AG04450 (cell line): ENCODE measurements at regions of chr17 and their contacts with region 1.

Region 1: GRCh38 chr17:20315821-20316220 is 151.5 kb downstream of the LGALS9B start:
- DNase-seq: no peak
- H3K4me3 ChIP-seq: no peak overlapping the region
- H3K27ac ChIP-seq: no peak overlapping the region
- H3K27me3 ChIP-seq: no peaks in the 10 kb centered on the region
- CTCF ChIP-seq: no peak

Region 2: DNA sequence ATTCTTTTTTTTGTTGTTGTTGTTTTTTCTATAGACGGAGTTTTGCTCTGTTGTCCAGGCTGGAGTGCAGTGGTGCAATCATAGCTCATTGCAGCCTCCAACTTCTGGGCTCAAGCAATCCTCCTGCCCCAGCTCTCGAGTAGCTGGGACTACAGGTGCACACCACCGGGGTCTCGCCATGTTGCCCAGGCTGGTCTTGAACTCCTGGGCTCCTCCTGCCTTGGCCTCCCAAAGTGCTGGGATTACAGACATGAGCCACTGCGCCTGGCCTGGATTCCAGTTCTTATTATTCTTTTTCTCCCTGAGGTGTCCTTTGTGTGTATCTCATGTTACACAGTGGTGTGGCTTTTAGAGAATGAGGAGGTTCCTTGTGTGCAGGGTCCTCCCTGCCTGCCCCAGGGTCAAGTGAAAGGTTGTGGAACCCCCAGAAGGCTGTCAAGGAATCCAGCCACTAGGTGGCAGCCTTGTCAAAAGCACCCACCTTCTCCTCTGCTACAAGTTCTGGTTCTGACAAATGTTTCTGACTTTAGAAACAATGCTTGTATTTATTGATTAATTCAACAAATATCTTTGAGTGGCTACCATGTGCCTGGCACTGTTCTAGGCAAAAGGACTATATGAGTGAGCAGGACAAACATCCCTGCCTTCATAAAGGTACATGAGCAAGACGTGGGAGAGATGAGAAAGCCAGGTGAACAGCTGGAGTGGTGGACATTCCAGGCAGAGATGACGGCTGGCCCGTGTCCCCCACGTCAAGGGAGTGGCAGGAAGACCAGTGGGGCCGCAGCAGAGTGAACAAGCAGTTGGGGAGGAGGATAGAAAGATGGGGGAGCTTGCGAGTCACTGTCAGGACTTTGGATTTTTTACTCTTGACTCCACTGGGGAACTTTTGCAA is 194.2 kb before region 1 on chr17:
- CTCF ChIA-PET with region 1: interaction called, 13 read pairs
- POLR2A ChIA-PET with region 1: no interaction called
- DNase-seq: peak; percentile 33
- H3K4me3 ChIP-seq: no peak overlapping the region
- H3K27ac ChIP-seq: no peak overlapping the region
- H3K27me3 ChIP-seq: no peaks in the 10 kb centered on the region
- CTCF ChIP-seq: peak; percentile 93